Tibial artery (tissue), 4 donors: ENCODE measurements at regions of chr19 and their contacts with region 1.

Region 1: DNA sequence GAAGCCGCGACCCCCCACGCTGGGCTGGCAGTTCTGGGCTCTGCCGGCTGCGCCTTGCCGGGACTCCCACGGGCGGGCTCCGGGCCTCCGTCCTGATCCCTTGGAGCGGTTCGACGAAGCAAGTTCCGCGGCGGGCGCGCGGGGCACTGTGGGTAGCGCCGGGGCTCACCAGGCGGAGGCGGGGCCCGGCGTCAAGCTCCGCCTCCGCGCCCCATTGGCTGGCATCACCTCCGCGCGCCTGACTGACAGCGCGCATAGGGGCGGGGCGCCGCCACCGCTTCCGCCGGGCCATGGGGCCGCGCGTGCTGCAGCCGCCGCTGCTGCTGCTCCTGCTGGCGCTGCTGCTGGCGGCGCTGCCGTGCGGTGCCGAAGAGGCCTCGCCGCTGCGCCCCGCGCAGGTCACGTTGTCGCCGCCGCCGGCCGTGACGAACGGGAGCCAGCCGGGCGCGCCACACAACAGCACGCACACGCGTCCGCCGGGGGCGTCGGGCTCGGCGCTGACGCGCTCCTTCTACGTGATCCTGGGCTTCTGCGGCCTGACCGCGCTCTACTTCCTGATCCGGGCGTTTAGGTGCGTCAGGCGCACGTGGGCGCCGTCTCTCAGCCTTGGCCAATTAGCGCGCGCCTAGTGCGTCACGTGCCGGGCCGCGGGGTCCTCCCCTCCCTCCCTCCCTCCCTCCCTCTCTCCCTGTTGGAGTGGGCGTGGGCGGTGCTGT is at the start of gene FAM174C:
- DNase-seq: peak; percentile 93 to 98
- H3K4me3 ChIP-seq: peak within 1 kb of the TSS; percentile 62 to 71
- H3K27ac ChIP-seq: peak within 1 kb of the TSS; percentile 91 to 94
- H3K4me1 ChIP-seq: peaks cover 13 to 63% (median 57%) of the 10 kb centered on the region in 4 donors
- H3K27me3 ChIP-seq: no peaks in the 10 kb centered on the region
- CTCF ChIP-seq: no peak

Region 2: DNA sequence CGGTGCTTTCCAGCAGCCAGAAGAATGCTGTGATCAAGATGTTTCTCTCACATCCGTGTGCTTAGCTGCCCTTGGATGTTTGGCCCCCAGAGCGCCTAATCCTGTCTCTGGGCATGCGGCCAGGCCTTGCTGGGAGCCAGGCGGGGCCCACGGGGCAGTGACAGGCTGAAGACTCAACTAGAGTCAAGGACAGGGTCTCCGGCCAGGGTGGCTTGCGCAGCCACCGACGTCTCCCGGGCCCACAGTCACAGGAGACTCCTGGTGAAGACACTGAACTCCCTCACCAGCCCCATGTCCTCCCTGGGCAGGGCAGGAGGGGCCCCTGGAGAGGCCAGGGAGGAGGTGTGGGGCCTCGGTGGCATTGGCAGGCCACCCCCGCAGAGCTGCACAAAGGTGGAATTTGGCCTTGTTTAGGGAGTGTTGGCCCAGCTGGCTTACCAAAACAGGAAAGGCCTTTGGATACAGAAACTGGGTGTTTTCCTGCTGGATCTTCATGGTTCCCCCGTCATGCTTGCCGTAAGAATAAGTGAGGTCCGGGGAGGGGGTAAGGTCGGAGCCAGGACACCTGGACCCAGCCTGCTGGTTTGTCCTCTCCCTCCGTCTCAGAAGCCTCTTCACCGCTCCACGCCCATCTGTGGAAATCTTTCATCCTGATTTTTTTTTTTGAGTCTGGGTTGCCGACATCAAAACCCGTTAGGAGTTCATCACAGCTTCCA is 98.3 kb after region 1 on chr19:
- intact Hi-C with region 1: loop called (anchors 5 kb)
- DNase-seq: no peak
- H3K4me3 ChIP-seq: no peak overlapping the region
- H3K27ac ChIP-seq: no peak overlapping the region
- H3K4me1 ChIP-seq: no peaks in the 10 kb centered on the region
- H3K27me3 ChIP-seq: no peaks in the 10 kb centered on the region
- CTCF ChIP-seq: no peak

Region 3: DNA sequence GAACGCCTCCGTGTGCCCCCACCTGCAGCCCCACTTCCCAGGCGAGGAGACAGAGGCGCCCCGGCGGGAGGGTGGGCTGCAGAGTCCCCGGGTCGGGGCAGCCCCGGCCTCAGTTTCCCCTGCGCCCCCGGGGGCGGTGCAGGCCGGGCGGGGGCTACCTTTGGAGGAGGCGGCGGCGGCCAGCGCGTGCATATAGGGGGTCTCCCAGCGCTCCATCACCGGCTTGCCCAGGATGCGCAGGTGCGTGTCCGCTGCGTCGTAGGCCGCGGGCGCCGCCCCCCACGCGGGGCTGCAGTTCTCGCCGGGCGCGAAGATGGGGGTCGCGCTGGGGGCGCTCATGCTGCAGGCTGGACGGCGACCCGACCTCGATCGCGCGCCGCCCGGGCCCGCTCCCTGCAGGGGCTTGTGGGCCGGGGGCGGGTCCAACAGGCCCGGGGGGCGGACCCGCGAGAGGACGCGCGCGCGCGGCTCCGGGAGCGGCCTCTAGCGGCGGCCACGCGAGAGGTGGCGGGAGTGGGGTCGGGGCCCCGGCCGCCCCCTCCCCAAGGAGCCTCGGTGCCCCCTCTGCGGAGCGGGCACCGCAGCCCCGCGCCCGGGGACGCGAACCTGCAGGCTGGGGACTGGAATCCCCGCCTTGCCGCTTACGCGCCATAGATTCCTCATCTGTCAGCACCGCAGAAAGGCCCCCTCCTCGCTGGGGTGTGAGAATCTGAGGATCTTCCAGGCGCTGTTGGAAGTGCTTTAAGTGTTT is 125.9 kb after region 1 on chr19 and contains the start of gene GAMT:
- intact Hi-C with region 1: loop called (anchors 5 kb)
- DNase-seq: no peak
- H3K4me3 ChIP-seq: peak within 1 kb of the TSS; percentile 59 to 60
- H3K27ac ChIP-seq: peak within 1 kb of the TSS; percentile 36 to 50
- H3K4me1 ChIP-seq: peaks cover 0 to 45% (median 33%) of the 10 kb centered on the region in 4 donors
- H3K27me3 ChIP-seq: no peaks in the 10 kb centered on the region
- CTCF ChIP-seq: peak; percentile 36 to 42